GM12878 (cell line): ENCODE measurements at regions of chr1 and their contacts with region 1.

Region 1: GRCh38 chr1:93629099-93630059 is 52.3 kb downstream of the BCAR3 start:
- DNase-seq: peak; percentile 28
- ATAC-seq: peak; percentile 89
- H3K4me3 ChIP-seq: no peak overlapping the region
- H3K27ac ChIP-seq: no peak overlapping the region
- H3K4me1 ChIP-seq: no peaks in the 10 kb centered on the region
- H3K27me3 ChIP-seq: no peaks in the 10 kb centered on the region
- CTCF ChIP-seq: peak; percentile 64 to 89 (median 73)
- EP300 ChIP-seq: no peak
- POLR2A ChIP-seq: no peak
- RAD21 ChIP-seq: peak; percentile 100

Region 2: DNA sequence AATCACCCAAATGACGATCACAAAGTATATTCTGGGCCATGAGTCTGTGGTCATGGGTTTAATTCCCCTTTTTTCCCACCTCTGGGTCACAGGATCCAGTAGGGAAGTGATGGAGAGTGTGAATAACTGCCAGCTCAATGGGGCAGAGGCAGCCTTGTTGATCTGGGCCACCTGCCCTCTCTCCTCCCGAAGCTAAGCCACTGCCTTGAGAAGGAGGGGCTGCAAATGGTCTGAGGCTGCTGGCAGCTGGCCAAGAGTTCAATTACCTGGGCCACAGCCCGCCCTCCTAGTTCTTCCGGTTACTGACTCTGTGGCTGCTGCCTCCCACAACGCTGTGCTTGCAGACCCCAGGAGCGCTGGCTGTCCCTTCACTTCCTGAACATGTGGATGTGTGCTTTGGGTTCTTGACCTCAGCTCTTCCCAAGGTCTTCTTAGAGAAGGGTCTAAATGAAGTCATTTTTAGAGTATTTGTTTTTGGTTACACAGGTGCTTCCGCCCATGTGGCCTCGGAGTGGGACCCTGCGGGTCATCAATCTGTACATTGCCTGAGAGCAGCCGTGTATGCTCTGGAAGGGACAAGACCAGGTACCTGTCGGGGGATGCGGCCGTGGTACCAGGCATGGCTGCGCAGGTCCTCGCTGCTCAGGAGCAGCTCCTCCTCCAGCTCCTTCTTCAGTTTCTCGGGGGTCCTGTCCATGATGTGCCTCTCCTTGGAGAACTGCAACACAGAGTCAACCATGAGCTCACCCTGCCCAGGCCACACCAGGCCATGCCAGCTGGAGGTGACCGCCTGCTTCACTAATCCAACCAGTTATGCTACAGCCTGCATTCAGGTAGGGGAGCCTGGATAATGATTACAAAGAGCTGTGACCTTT is 37.5 kb before region 1 on chr1:
- CTCF ChIA-PET with region 1: interaction called, 12 read pairs
- POLR2A ChIA-PET with region 1: no interaction called
- RAD21 ChIA-PET with region 1: no interaction called
- SMC1A ChIA-PET with region 1: interaction called, 5 read pairs
- in situ Hi-C with region 1: no loop called
- intact Hi-C with region 1: no loop called
- DNase-seq: peak; percentile 46
- ATAC-seq: peak; percentile 83
- H3K4me3 ChIP-seq: no peak overlapping the region
- H3K27ac ChIP-seq: no peak overlapping the region
- H3K4me1 ChIP-seq: peaks cover 4% of the 10 kb centered on the region
- H3K27me3 ChIP-seq: no peaks in the 10 kb centered on the region; a peak in 1 of 4 replicates
- CTCF ChIP-seq: no peak
- EP300 ChIP-seq: no peak
- POLR2A ChIP-seq: no peak
- RAD21 ChIP-seq: no peak

Region 3: GRCh38 chr1:93661829-93662474 is 32.6 kb after region 1 on chr1:
- CTCF ChIA-PET with region 1: interaction called, 12 read pairs
- POLR2A ChIA-PET with region 1: no interaction called
- RAD21 ChIA-PET with region 1: interaction called, 3 read pairs
- SMC1A ChIA-PET with region 1: interaction called, 4 read pairs
- in situ Hi-C with region 1: no loop called
- intact Hi-C with region 1: no loop called
- DNase-seq: no peak
- ATAC-seq: peak; percentile 71
- H3K4me3 ChIP-seq: no peak overlapping the region
- H3K27ac ChIP-seq: no peak overlapping the region
- H3K4me1 ChIP-seq: no peaks in the 10 kb centered on the region
- H3K27me3 ChIP-seq: no peaks in the 10 kb centered on the region
- CTCF ChIP-seq: no peak
- EP300 ChIP-seq: no peak
- POLR2A ChIP-seq: no peak
- RAD21 ChIP-seq: no peak

Region 4: GRCh38 chr1:93701619-93702018 is 72.2 kb after region 1 on chr1:
- CTCF ChIA-PET with region 1: interaction called, 8 read pairs
- POLR2A ChIA-PET with region 1: interaction called, 5 read pairs
- RAD21 ChIA-PET with region 1: interaction called, 39 read pairs
- SMC1A ChIA-PET with region 1: interaction called, 13 read pairs
- in situ Hi-C with region 1: no loop called
- intact Hi-C with region 1: no loop called
- DNase-seq: no peak
- ATAC-seq: peak; percentile 45
- H3K4me3 ChIP-seq: no peak overlapping the region
- H3K27ac ChIP-seq: peak overlapping the region; percentile 63
- H3K4me1 ChIP-seq: peaks cover 54% of the 10 kb centered on the region
- H3K27me3 ChIP-seq: no peaks in the 10 kb centered on the region
- CTCF ChIP-seq: no peak
- EP300 ChIP-seq: no peak
- POLR2A ChIP-seq: no peak
- RAD21 ChIP-seq: no peak

Region 5: GRCh38 chr1:93749894-93750301 is 120.5 kb after region 1 on chr1:
- CTCF ChIA-PET with region 1: interaction called, 8 read pairs
- POLR2A ChIA-PET with region 1: no interaction called
- RAD21 ChIA-PET with region 1: interaction called, 17 read pairs
- SMC1A ChIA-PET with region 1: interaction called, 10 read pairs
- in situ Hi-C with region 1: no loop called
- intact Hi-C with region 1: no loop called
- DNase-seq: no peak
- ATAC-seq: peak; percentile 56
- H3K4me3 ChIP-seq: no peak overlapping the region
- H3K27ac ChIP-seq: no peak overlapping the region
- H3K4me1 ChIP-seq: peaks cover 19% of the 10 kb centered on the region
- H3K27me3 ChIP-seq: no peaks in the 10 kb centered on the region
- CTCF ChIP-seq: peak in 2 of 3 experiments; percentile 9 to 41; a peak in 2 of 6 replicates
- EP300 ChIP-seq: no peak
- POLR2A ChIP-seq: no peak
- RAD21 ChIP-seq: peak; percentile 39; the same call in 1 of the 2 replicates

Region 6: DNA sequence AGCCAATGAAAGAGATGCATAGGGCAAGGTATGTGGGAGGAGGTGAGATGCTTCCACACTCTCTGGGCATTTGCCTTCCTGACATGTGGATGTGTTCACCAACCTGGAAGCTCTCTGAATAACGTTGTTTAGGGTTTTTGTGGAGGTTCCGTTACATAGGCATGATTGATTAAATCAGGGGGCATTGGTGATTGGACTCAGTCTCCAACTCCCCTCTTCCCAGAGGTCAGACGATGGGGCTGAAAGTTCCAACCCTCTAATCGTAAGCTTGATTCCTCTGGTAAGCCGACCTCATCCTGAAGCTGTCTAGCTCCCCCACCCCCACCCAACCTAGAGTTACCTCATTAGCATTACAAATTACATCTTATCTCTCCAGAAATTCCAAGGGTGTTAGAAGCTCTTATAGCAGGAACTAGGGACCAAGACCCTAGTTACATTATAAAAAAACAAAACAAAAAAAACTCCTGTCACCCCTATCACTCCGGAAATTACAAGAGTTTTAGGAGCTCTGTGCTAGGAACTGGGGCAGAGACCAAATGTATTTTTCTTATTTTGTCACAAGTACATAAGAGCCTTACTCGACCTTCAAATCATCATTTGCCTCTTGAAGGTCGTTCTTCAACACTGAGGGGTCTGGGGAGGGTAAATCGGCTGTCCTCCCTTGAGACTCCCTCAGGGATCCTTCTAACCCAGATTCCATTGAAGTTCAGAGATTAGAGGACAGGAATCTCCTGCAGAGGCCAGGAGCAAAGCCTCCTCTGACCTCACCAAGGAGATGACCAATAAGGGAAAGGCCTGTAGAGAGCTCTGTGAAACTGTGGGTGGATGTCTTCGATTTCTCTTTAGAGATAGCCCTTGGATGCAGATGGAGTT is 191.4 kb after region 1 on chr1:
- CTCF ChIA-PET with region 1: interaction called, 555 read pairs
- POLR2A ChIA-PET with region 1: interaction called, 4 read pairs
- RAD21 ChIA-PET with region 1: interaction called, 483 read pairs
- SMC1A ChIA-PET with region 1: interaction called, 505 read pairs
- in situ Hi-C with region 1: loop called (anchors 5 kb)
- intact Hi-C with region 1: no loop called
- DNase-seq: no peak
- ATAC-seq: no peak
- H3K4me3 ChIP-seq: no peak overlapping the region
- H3K27ac ChIP-seq: no peak overlapping the region
- H3K4me1 ChIP-seq: peaks cover 8% of the 10 kb centered on the region
- H3K27me3 ChIP-seq: no peaks in the 10 kb centered on the region; a peak in 2 of 4 replicates
- CTCF ChIP-seq: no peak
- EP300 ChIP-seq: no peak
- POLR2A ChIP-seq: no peak
- RAD21 ChIP-seq: no peak